Sigmoid colon (tissue), 7 donors: ENCODE measurements at regions of chr9 and their contacts with region 1.

Region 1: GRCh38 chr9:128635283-128636023 is 21.2 kb downstream of the DYNC2I2 start:
- DNase-seq: peak; percentile 92
- H3K4me3 ChIP-seq: no peak overlapping the region
- H3K27ac ChIP-seq: peak overlapping the region; percentile 75 to 91 (median 80)
- H3K4me1 ChIP-seq: peaks cover 0 to 26% (median 22%) of the 10 kb centered on the region in 4 donors
- H3K27me3 ChIP-seq: no peaks in the 10 kb centered on the region
- CTCF ChIP-seq: peak in 3 of 4 experiments; percentile 20 to 42 (median 39)
- EP300 ChIP-seq: no peak
- POLR2A ChIP-seq: no peak

Region 2: GRCh38 chr9:128067876-128068613 is 567.4 kb before region 1 on chr9 and contains the start of gene SLC25A25:
- intact Hi-C with region 1: no loop called
- DNase-seq: peak; percentile 100
- H3K4me3 ChIP-seq: peak within 1 kb of the TSS; percentile 75 to 93 (median 90)
- H3K27ac ChIP-seq: peak within 1 kb of the TSS; percentile 96 to 100 (median 98)
- H3K4me1 ChIP-seq: peaks cover 0 to 66% (median 55%) of the 10 kb centered on the region in 4 donors
- H3K27me3 ChIP-seq: no peaks in the 10 kb centered on the region
- CTCF ChIP-seq: no peak
- EP300 ChIP-seq: no peak
- POLR2A ChIP-seq: no peak
- total RNA-seq, gene SLC25A25: 10.2 to 77.2 (median 12.9) TPM

Region 3: DNA sequence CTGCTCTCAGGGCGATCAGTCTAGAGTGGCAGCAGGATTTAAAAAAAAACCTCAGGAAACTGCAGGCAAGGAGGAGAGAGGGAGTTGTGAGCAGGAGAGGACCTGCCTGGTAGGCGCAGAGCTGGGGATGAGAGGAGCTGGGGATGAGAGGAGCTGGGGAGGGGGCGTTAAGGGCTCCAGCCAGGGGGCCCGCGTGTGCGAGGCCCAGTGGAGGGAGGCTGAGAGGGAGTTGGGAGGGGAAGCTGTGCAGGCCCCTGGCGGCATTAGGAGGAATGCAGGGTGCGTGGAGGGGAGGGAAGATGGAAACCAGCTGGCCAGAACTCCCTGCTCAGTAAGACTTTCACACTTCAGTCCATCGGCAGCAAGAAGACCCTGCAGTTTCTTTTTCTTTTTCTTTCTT is 1584.9 kb after region 1 on chr9:
- intact Hi-C with region 1: loop called (anchors 10 kb)
- DNase-seq: no peak
- H3K4me3 ChIP-seq: no peak overlapping the region
- H3K27ac ChIP-seq: peak overlapping the region; percentile 70 to 99 (median 78)
- H3K4me1 ChIP-seq: peaks cover 0 to 43% (median 35%) of the 10 kb centered on the region in 4 donors
- H3K27me3 ChIP-seq: no peaks in the 10 kb centered on the region
- CTCF ChIP-seq: peak; percentile 36 to 65 (median 42)
- EP300 ChIP-seq: no peak
- POLR2A ChIP-seq: no peak